Psoas muscle (tissue), 8 donors: ENCODE measurements at regions of chr10 and their contacts with region 1.

Region 1: DNA sequence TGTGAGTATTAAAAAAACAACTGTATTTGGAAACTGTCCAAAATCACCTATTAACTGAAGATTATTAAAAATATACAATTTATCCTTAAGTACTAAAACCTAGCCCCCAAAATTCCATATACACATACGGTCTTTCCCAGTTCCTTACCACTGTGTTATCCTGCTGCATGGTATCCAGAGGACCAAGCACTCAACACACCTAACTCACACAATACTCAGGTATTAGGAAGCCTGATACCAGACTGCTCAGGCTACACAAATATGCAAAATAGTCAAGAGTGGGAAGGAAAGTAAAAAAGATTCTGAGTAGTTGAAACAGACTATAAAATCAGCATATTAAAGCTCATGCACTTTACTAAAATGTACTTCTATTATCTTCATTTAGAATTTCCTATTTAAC is 67.2 kb downstream of the EPC1 start:
- DNase-seq: no peak
- ATAC-seq: no peak
- H3K4me3 ChIP-seq: no peak overlapping the region
- H3K27ac ChIP-seq: no peak overlapping the region
- H3K4me1 ChIP-seq: no peaks in the 10 kb centered on the region
- H3K27me3 ChIP-seq: no peaks in the 10 kb centered on the region
- CTCF ChIP-seq: no peak

Region 2: DNA sequence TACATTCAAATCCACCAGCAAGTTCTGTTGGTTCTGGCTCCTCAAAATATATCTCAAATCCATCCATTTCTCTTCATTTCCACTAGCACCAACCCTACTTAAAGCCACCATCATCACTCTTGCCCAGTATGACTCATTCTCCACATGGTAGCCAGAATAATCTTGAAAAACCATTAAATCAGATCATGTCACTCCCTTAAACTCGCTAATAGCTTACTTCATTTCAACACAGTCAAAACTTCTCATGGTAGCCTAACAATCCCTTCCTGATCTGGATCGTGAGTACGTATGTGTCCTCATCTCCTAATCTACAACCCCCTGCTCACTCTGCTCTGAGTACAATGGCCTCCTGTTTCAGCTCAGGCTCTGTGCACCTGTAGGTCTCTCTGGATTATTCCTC is 58.5 kb after region 1 on chr10:
- intact Hi-C with region 1: loop called in 1 of 2 experiments (anchors 5 kb)
- DNase-seq: no peak
- ATAC-seq: peak in 3 of 4 donors; percentile 23 to 33 (median 28)
- H3K4me3 ChIP-seq: peak overlapping the region; percentile 9
- H3K27ac ChIP-seq: peak overlapping the region; percentile 17
- H3K4me1 ChIP-seq: peaks cover 98% of the 10 kb centered on the region
- H3K27me3 ChIP-seq: no peaks in the 10 kb centered on the region
- CTCF ChIP-seq: no peak